HepG2 (cell line): ENCODE measurements at regions of chr17 and their contacts with region 1.

Region 1: GRCh38 chr17:81683584-81684237 is at the starts of genes ARL16 and HGS:
- DNase-seq: peak; percentile 99
- ATAC-seq: peak; percentile 92
- H3K4me3 ChIP-seq: peak within 1 kb of the TSS; percentile 94 to 99 (median 97)
- H3K27ac ChIP-seq: peak within 1 kb of the TSS; percentile 68
- H3K4me1 ChIP-seq: peaks cover 43% of the 10 kb centered on the region
- H3K27me3 ChIP-seq: no peaks in the 10 kb centered on the region; a peak in 1 of 5 replicates
- CTCF ChIP-seq: no peak
- EP300 ChIP-seq: no peak
- POLR2A ChIP-seq: peak; percentile 70 to 76
- RAD21 ChIP-seq: peak; percentile 64
- total RNA-seq, gene ARL16: 18.8 and 20.8 TPM in 2 replicates
- total RNA-seq, gene HGS: 54.1 and 73.3 TPM in 2 replicates

Region 2: GRCh38 chr17:81696218-81696941 is 12.7 kb after region 1 on chr17:
- CTCF ChIA-PET with region 1: no interaction called
- POLR2A ChIA-PET with region 1: interaction called, 124 read pairs
- in situ Hi-C with region 1: no loop called
- intact Hi-C with region 1: no loop called
- DNase-seq: no peak
- ATAC-seq: 0 out of 3 replicates have a peak, but pooled peaks have one; percentile 2
- H3K4me3 ChIP-seq: no peak overlapping the region
- H3K27ac ChIP-seq: no peak overlapping the region
- H3K4me1 ChIP-seq: peaks cover 9% of the 10 kb centered on the region
- H3K27me3 ChIP-seq: no peaks in the 10 kb centered on the region; a peak in 1 of 5 replicates
- CTCF ChIP-seq: no peak
- EP300 ChIP-seq: no peak
- POLR2A ChIP-seq: no peak; a peak in 1 of 4 replicates
- RAD21 ChIP-seq: no peak

Region 3: GRCh38 chr17:81702971-81703746 is 19.4 kb after region 1 on chr17 and contains the start of gene MRPL12:
- CTCF ChIA-PET with region 1: no interaction called
- POLR2A ChIA-PET with region 1: interaction called, 124 read pairs
- in situ Hi-C with region 1: no loop called
- intact Hi-C with region 1: no loop called
- DNase-seq: peak; percentile 91
- ATAC-seq: peak; percentile 82
- H3K4me3 ChIP-seq: peak within 1 kb of the TSS; percentile 92 to 93 (median 92)
- H3K27ac ChIP-seq: peak within 1 kb of the TSS; percentile 93
- H3K4me1 ChIP-seq: peaks cover 33% of the 10 kb centered on the region
- H3K27me3 ChIP-seq: no peaks in the 10 kb centered on the region; a peak in 1 of 5 replicates
- CTCF ChIP-seq: peak; percentile 69
- EP300 ChIP-seq: 0 out of 4 replicates have a peak, but pooled peaks of 1 of the 2 experiments have one; percentile 37
- POLR2A ChIP-seq: peak in 1 of 2 experiments; percentile 96; a peak in 2 of 4 replicates
- RAD21 ChIP-seq: peak; percentile 47
- total RNA-seq, gene MRPL12: 39.1 and 72.5 TPM in 2 replicates

Region 4: GRCh38 chr17:81711814-81712467 is 28.2 kb after region 1 on chr17 and contains the start of gene SLC25A10:
- CTCF ChIA-PET with region 1: no interaction called
- POLR2A ChIA-PET with region 1: interaction called, 50 read pairs
- in situ Hi-C with region 1: no loop called
- intact Hi-C with region 1: no loop called
- DNase-seq: peak; percentile 89
- ATAC-seq: peak; percentile 56
- H3K4me3 ChIP-seq: peak within 1 kb of the TSS; percentile 87 to 95 (median 92)
- H3K27ac ChIP-seq: peak within 1 kb of the TSS; percentile 93
- H3K4me1 ChIP-seq: peaks cover 32% of the 10 kb centered on the region
- H3K27me3 ChIP-seq: no peaks in the 10 kb centered on the region; a peak in 1 of 5 replicates
- CTCF ChIP-seq: no peak; the same call in 1 of the 2 replicates
- EP300 ChIP-seq: peak; percentile 41 to 88; a peak in 2 of 4 replicates
- POLR2A ChIP-seq: peak in 1 of 2 experiments; percentile 45; a peak in 1 of 4 replicates
- RAD21 ChIP-seq: peak; percentile 79
- total RNA-seq, gene SLC25A10: 111 and 140 TPM in 2 replicates

Region 5: DNA sequence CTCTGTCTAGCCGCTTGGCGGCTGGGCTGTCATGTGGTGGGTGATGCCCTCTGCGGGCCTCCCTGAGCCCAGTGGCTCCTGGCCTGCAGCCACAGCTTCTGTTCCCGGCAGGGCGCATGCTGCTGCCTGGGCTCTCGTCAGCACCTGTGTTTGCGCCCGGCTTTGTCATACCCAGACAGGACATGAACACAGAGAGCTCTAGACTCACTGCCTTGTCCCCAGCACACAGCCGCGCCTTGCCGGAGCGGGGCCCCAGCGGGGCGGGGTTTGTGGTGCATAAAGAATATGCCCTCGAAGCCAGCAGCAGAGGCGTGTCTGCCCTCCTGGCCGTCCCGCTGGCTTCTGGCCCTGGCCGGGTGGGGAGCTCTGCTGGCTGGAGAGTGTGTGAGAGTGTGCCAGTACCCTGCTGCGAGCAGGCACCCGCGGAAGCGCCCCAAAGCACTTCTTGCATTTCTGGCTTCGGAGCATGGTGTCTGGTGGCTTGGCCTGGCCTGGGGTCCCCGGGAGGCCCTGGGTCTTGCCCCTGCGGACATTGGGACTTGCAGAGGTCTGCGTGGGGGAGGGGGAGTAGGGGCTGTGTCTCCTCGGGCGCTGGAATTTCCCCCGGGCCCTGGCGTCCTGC is 308.1 kb after region 1 on chr17:
- CTCF ChIA-PET with region 1: no interaction called
- POLR2A ChIA-PET with region 1: no interaction called
- in situ Hi-C with region 1: no loop called
- intact Hi-C with region 1: no loop called
- DNase-seq: peak; percentile 98
- ATAC-seq: peak; percentile 66
- H3K4me3 ChIP-seq: peak overlapping the region; percentile 29 to 69 (median 44)
- H3K27ac ChIP-seq: peak overlapping the region; percentile 97
- H3K4me1 ChIP-seq: peaks cover 70% of the 10 kb centered on the region
- H3K27me3 ChIP-seq: no peaks in the 10 kb centered on the region
- CTCF ChIP-seq: peak; percentile 77
- EP300 ChIP-seq: peak; percentile 3 to 66; a peak in 3 of 4 replicates
- POLR2A ChIP-seq: peak in 1 of 2 experiments; percentile 92; a peak in 2 of 4 replicates
- RAD21 ChIP-seq: peak; percentile 88